A673 (cell line): ENCODE measurements at regions of chr1 and their contacts with region 1.

Region 1: GRCh38 chr1:160085686-160086455 is 4.5 kb downstream of the KCNJ9 start:
- DNase-seq: peak; percentile 82
- H3K4me3 ChIP-seq: no peak overlapping the region
- H3K27ac ChIP-seq: no peak overlapping the region
- H3K4me1 ChIP-seq: no peaks in the 10 kb centered on the region
- H3K27me3 ChIP-seq: peaks cover 24% of the 10 kb centered on the region
- CTCF ChIP-seq: peak; percentile 89

Region 2: DNA sequence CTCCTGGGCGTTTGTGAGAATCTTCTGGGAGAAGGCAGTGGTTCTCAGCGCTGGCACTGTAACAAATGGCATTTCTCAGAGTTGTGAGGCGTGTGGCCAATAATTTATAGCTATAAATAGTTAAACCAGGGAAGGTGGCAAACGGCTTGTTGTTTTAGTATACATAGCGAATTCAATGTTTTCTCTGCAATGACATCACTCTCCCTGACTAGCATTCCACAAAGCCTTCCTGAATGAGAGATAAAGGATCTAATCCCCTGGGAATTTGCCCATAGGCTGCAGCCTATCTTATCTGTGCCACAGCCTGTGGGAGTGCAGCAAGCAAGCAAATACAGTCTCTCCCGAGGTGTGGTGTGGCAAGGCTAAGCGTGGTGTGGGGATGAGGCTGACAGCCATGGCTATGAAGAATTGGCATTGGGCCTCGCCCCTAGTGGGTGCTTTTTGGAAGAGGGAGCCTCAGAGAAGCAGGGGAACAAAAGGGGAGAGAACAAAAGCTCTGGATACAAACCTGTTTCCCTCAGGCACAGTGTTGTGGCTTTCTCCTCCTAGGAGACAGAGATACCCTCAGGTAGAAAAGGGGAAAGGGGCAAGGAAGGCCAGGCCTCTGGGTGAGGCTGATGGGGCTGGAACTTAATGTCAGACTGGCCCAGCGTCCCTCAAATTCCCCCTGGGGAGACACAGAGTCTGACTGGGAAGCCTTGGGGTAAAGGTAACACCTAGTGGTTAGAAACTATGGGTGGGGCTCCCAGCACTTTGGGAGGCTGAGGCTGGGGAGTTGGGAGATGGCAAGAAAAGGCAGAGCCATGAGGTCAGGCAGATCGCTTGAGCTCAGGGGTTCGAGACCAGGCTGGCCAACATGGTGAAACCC is 169.5 kb before region 1 on chr1:
- CTCF ChIA-PET with region 1: no interaction called
- POLR2A ChIA-PET with region 1: no interaction called
- intact Hi-C with region 1: no loop called
- DNase-seq: peak; percentile 84
- H3K4me3 ChIP-seq: no peak overlapping the region
- H3K27ac ChIP-seq: peak overlapping the region; percentile 33
- H3K4me1 ChIP-seq: peaks cover 15% of the 10 kb centered on the region
- H3K27me3 ChIP-seq: no peaks in the 10 kb centered on the region
- CTCF ChIP-seq: no peak

Region 3: DNA sequence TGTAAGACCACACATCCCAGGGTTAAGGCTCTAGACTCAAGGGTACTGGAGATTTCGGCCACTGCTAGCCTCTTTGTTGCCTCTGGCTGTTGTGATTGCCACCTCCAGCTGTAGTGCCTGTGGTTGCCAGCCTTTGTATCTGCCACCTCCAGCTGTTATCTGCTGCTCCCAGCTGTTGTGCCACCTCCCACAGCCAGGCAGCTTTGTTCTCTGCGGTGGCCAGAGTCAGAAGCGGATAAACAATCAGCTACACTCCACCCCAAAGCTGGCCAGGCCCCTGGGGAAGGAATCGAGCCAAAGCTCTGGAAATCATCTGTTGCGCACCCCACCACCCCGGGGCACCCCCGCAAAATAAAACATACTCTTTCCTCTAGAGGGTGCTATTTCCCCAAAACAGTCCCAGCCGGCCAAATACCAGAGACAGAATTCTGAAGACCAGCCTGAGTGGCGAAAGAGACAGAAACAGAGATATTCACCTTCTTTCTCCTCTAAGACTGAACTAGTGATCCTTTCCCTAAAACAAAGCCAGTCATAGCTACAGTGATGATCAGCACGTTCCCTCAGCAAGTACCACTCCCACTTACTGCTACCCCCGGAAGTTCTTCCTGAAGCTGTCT is 39.3 kb before region 1 on chr1:
- CTCF ChIA-PET with region 1: interaction called, 4 read pairs
- POLR2A ChIA-PET with region 1: no interaction called
- intact Hi-C with region 1: loop called (anchors 5 kb)
- DNase-seq: peak; percentile 58
- H3K4me3 ChIP-seq: no peak overlapping the region
- H3K27ac ChIP-seq: no peak overlapping the region
- H3K4me1 ChIP-seq: no peaks in the 10 kb centered on the region
- H3K27me3 ChIP-seq: peaks cover 6% of the 10 kb centered on the region
- CTCF ChIP-seq: peak; percentile 76

Region 4: DNA sequence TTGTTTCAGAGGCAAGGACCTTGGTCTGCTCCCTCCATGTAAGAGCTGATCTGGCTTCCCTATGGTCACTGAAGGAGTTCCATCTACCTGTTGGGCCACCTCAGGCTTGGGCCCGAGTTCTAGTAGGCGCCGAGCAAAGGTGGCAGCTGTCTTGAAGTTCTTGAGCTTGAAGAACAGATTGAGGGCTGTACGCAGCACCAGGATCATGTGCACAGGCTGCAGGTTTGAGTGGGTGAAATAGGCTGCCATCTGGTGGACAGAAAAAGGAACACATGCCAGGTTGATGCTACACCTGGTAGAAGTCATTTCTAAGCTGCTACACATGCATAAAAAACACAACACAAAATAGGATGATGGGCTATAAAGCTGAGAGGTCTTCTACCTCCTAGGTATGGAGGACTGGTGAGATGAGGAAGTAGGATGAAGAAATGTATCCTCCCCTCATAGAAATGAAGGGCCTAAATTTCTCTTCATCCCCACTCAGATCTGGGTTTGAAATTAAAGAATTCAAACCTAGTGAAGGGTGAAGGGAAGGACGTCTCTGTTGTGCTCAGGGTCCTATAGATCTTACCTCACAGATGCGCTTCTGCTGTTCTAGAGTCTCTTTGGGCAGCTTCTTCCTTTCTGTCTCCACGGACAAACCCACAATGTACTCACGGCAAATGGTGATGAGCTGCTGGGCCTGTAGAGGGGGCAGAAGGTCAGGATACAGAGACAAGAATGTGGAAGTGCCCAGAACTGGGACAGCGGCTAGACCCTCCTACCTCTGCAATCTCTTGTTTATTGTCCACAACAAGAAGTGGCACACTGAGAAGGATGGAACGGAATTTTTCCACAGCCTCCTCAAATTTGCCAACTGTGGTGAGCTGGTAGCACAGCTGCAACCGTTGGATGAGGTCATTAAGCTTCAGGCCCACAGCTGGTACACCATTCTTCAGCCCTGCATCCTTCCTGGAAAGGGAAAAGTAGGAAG is 205.7 kb after region 1 on chr1:
- CTCF ChIA-PET with region 1: interaction called, 7 read pairs
- POLR2A ChIA-PET with region 1: no interaction called
- intact Hi-C with region 1: loop called (anchors 1 kb)
- DNase-seq: peak; percentile 75
- H3K4me3 ChIP-seq: no peak overlapping the region
- H3K27ac ChIP-seq: no peak overlapping the region
- H3K4me1 ChIP-seq: no peaks in the 10 kb centered on the region
- H3K27me3 ChIP-seq: no peaks in the 10 kb centered on the region
- CTCF ChIP-seq: peak; percentile 88